Dorsolateral prefrontal cortex (tissue), 120 donors: ENCODE measurements at regions of chr9 and their contacts with region 1.

Region 1: GRCh38 chr9:8030095-8030494 is 230.5 kb upstream of the DMAC1 start:
- DNase-seq: no peak
- H3K4me3 ChIP-seq: no peak overlapping the region
- H3K27ac ChIP-seq: no peak overlapping the region
- H3K27me3 ChIP-seq: no peaks in the 10 kb centered on the region
- CTCF ChIP-seq: no peak

Region 2: GRCh38 chr9:7967093-7967827 is 62.8 kb before region 1 on chr9:
- intact Hi-C with region 1: no loop called
- DNase-seq: no peak
- H3K4me3 ChIP-seq: no peak overlapping the region
- H3K27ac ChIP-seq: no peak overlapping the region
- H3K27me3 ChIP-seq: peaks cover 0 to 5% (median 0%) of the 10 kb centered on the region in 45 donors
- CTCF ChIP-seq: no peak

Region 3: DNA sequence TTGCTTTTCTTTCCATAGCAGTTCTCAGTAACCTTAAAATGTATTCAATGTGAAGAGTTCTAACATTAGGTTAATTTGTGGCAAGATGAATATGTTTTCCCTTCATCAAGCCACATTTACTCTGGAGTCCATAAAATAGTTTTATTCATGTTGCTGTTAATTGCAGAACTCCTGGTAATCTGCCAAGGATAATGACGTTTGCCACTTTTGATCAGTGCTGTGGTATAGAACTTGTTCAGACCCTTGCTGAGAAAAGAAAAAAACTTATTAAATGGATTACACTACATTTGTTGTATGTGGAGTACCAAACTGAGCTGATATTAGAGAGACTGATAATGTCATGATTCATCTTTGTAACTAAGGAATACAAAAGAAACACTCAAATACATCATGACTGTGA is 18.1 kb before region 1 on chr9:
- intact Hi-C with region 1: loop called in 1 of 2 experiments (anchors 1 kb)
- DNase-seq: no peak
- H3K4me3 ChIP-seq: no peak overlapping the region
- H3K27ac ChIP-seq: no peak overlapping the region
- H3K27me3 ChIP-seq: no peaks in the 10 kb centered on the region
- CTCF ChIP-seq: no peak